ENCODE measurements at regions of chr19 and their contacts with region 1.

Region 1: DNA sequence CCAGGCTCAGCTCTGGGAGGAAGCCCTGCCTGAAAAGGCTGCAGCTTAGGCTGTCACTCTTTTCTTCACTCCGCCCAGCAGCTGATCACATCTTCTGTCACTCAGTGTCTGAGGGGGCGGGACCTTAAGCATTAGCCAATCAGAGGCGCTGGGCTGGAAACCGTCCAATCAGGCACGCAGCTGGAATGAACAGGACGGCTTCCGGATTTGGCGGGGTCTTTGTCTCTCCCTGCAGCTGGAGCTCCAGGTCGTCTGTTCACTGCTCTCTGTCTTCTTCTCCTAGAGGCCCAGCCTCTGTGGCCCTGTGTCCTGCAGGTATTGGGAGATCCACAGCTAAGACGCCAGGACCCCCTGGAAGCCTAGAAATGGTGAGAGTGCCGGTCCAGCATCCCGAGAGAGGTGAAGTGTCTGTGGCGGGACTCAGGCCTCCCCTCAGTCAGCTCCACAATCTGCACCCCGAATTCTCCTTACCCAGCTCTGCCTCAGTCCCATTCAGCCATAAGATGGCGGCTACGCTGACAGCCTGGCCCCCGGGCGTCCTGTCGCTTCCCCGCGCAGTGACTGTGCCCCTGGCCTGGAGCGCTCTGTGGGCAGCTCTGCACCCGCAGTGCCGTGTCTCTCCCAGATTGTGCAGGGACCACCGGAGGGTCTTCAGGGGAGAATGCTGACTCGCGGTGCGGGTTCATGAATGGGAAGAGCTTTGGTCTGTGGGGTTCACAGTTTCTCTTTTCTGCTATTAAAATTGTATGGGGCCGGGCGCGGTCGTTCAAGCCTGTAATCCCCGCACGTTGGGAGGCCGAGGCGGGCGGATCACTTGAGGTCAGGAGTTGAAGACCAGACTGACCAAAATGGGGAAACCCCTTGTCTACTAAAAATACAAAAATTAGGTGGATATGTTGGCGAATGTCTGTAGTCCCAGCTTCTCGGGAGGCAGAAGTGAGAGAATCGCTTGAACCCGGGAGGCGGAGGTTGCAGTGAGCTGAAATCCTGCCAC is at the start of gene ZNF66:
- DNase-seq: peak; percentile 79 to 97 (median 95)
- ATAC-seq: peak; percentile 98
- H3K4me3 Mint-ChIP-seq: peak within 1 kb of the TSS; percentile 92 to 100 (median 99)
- H3K27ac Mint-ChIP-seq: peak within 1 kb of the TSS; percentile 93 to 99 (median 96)
- H3K4me1 Mint-ChIP-seq: peaks cover 8 to 31% (median 23%) of the 10 kb centered on the region in 4 donors
- H3K27me3 Mint-ChIP-seq: no peaks in the 10 kb centered on the region
- polyA plus RNA-seq, gene ZNF66: 3.4 to 4.1 (median 3.6) TPM

Region 2: DNA sequence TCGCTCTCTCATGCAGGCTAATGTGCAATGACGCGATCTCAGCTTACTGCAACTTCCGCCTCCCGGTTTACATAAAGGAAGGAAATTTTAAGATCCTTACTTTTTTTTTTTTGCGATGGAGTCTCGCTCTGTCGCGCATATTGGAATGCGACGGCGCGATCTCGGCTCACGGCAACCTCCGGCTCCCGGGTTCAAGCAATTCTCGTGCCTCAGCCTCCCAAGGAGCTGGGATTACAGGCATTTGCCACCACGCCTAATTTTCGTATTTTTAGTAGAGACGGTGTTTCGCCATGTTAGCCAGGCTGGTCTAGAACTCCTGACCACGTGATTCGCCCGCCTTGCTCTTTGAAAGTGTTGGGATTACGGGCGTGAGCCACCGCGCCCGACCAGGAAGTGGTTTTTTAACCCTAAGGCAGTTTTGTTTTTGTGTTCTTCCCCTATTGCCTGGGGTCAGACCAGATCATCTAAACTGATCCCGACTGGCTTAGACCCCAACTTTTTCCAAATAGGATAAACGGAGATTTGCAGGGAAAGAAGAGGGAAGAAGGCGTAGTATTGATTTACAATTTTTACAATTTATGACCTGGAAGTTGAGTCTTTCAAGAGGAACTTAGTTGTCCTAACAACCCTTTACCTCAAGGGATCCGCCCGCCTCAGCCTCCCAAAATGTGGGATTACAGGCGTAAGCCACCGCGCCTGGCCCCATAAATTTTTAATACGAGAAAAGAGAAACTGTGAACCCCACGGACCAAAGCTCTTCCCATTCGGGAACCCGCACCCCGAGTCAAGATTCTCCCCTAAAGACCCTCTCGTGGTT is 352.8 kb before region 1 on chr19:
- POLR2A ChIA-PET with region 1: interaction called, 10 read pairs
- DNase-seq: peak in 4 of 10 donors; percentile 2 to 38 (median 26)
- ATAC-seq: no peak
- H3K4me3 Mint-ChIP-seq: peak overlapping the region; percentile 89 to 97 (median 94)
- H3K27ac Mint-ChIP-seq: peak overlapping the region; percentile 68 to 97 (median 92)
- H3K4me1 Mint-ChIP-seq: peaks cover 2 to 11% (median 7%) of the 10 kb centered on the region in 4 donors
- H3K27me3 Mint-ChIP-seq: peaks cover 0 to 3% (median 0%) of the 10 kb centered on the region in 5 donors

Region 3: GRCh38 chr19:20661150-20661819 is 115.1 kb before region 1 on chr19 and contains the start of gene ZNF626:
- POLR2A ChIA-PET with region 1: interaction called, 14 read pairs
- DNase-seq: peak; percentile 73 to 98 (median 90)
- ATAC-seq: peak; percentile 97 to 98
- H3K4me3 Mint-ChIP-seq: peak within 1 kb of the TSS; percentile 92 to 97 (median 94)
- H3K27ac Mint-ChIP-seq: peak within 1 kb of the TSS; percentile 94 to 98 (median 97)
- H3K4me1 Mint-ChIP-seq: peaks cover 12 to 50% (median 31%) of the 10 kb centered on the region in 4 donors
- H3K27me3 Mint-ChIP-seq: no peaks in the 10 kb centered on the region
- polyA plus RNA-seq, gene ZNF626: 4.8 to 13.7 (median 8.8) TPM

Region 4: DNA sequence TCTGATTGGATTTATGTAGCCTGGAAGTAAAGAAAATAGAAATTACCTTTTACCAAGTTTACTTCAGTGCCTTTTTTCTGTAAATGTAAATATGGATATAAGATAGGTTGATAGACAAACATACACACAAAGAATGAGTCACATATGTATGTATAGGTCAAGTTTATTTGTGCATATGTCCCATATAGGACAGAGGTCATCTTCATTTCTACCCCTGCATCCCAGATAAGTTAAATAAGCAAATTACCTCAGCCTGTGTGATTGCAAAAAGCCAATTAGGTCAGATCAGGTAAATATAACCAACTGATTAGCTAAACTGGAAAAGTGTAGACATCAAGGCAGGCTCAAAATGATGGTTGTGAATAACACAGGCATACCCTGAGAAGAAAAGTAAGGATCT is 49.6 kb before region 1 on chr19:
- POLR2A ChIA-PET with region 1: no interaction called
- DNase-seq: no peak
- ATAC-seq: no peak
- H3K4me3 Mint-ChIP-seq: no peak overlapping the region
- H3K27ac Mint-ChIP-seq: no peak overlapping the region
- H3K4me1 Mint-ChIP-seq: no peaks in the 10 kb centered on the region
- H3K27me3 Mint-ChIP-seq: peaks cover 0 to 2% (median 0%) of the 10 kb centered on the region in 5 donors

Region 5: GRCh38 chr19:20923077-20923871 is 146.9 kb after region 1 on chr19 and contains the start of gene ZNF85:
- POLR2A ChIA-PET with region 1: interaction called, 11 read pairs
- DNase-seq: peak; percentile 78 to 95 (median 90)
- ATAC-seq: peak; percentile 99
- H3K4me3 Mint-ChIP-seq: peak within 1 kb of the TSS; percentile 95 to 98 (median 96)
- H3K27ac Mint-ChIP-seq: peak within 1 kb of the TSS; percentile 86 to 98 (median 94)
- H3K4me1 Mint-ChIP-seq: peaks cover 4 to 26% (median 14%) of the 10 kb centered on the region in 4 donors
- H3K27me3 Mint-ChIP-seq: no peaks in the 10 kb centered on the region
- polyA plus RNA-seq, gene ZNF85: 5.8 to 11.1 (median 6.4) TPM